ENCODE measurements at regions of chr5 and their contacts with region 1.

Region 1: DNA sequence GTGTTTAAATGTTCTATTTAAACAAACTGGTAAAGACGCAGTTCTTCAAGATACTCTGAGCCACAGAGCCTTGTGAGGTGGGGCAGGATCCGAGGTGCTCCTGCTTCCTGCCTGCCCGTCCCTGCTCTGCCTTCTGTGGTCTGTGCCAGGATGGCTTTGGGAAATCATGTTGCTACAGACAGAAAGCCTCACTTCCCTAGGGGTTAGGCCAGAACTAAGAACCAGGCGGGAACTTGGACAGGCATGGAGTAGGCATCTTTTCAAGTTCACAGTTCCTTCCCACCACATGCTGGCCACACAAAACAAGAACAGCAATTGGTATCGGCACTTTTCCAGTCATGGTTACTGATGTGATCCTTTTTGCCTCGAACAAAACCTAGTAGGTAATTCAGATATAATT is 67.7 kb upstream of the SPOCK1 start:
- DNase-seq: peak; percentile 25
- H3K4me3 ChIP-seq: no peak overlapping the region
- H3K27ac ChIP-seq: peak overlapping the region in 1 of 2 experiments; percentile 90; a peak in 2 of 4 replicates
- H3K4me1 ChIP-seq: peaks cover 40 to 51% of the 10 kb centered on the region in 2 experiments; a peak in 3 of 4 replicates
- H3K27me3 ChIP-seq: no peaks in the 10 kb centered on the region; the same call in 1 of the 2 replicates
- CTCF ChIP-seq: no peak
- EP300 ChIP-seq: no peak
- RAD21 ChIP-seq: no peak

Region 2: DNA sequence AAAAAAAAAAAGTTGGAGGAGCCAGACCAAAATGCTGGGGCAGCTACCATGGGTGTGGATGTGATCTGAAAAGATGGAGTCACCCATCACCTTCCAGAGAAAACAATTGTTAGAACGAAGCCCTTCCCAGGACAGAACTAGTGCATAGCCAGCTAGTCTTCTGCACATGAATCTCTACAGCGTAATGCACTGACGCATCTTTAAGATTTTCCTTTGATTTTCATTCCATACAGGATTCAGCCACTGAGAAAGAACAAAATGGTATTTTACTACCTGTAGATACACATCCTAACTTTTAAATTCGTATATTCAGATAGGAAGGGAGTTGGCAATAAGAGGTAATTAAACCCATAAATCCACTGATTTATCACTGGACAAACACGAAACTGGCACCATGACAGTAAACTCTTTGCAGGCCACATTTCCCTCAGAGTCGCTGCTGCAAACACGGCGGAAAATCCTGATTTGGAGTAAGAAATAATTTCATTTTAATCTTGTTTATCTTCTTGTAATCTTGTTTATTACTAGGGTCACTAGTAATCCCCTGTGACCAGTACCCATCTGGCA is 274.2 kb before region 1 on chr5:
- CTCF ChIA-PET with region 1: no interaction called
- POLR2A ChIA-PET with region 1: no interaction called
- DNase-seq: peak; percentile 22
- H3K4me3 ChIP-seq: no peak overlapping the region
- H3K27ac ChIP-seq: no peak overlapping the region
- H3K4me1 ChIP-seq: peaks cover 0 to 2% of the 10 kb centered on the region in 2 experiments; a peak in 2 of 4 replicates
- H3K27me3 ChIP-seq: no peaks in the 10 kb centered on the region
- CTCF ChIP-seq: no peak
- EP300 ChIP-seq: no peak
- RAD21 ChIP-seq: no peak

Region 3: DNA sequence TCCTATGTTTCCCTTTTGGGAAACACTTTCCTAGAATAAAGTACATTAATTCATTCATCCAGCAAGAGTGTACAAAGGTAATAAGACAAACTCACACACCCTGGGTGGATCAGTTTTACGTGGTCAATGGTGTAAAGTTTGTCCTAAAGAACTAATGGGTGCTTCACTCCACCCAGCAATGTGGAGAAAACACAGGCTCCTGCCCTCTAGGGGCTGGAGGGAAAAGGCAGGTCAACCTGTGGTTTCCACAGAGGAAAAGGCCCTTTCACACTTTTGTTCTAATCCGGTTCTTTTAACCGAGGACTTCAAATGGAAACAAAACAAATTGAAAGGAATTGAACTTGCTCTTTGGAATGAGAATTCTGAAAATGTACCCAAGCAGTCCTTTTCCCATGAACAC is 13.2 kb after region 1 on chr5:
- CTCF ChIA-PET with region 1: interaction called, 10 read pairs
- POLR2A ChIA-PET with region 1: no interaction called
- DNase-seq: no peak
- H3K4me3 ChIP-seq: no peak overlapping the region
- H3K27ac ChIP-seq: no peak overlapping the region
- H3K4me1 ChIP-seq: peaks cover 0 to 25% of the 10 kb centered on the region in 2 experiments; a peak in 3 of 4 replicates
- H3K27me3 ChIP-seq: no peaks in the 10 kb centered on the region; the same call in 1 of the 2 replicates
- CTCF ChIP-seq: peak; percentile 37
- EP300 ChIP-seq: no peak
- RAD21 ChIP-seq: no peak

Measured in SK-N-SH (cell line).